Colonic mucosa (tissue), 4 donors: ENCODE measurements at regions of chr3 and their contacts with region 1.

Region 1: DNA sequence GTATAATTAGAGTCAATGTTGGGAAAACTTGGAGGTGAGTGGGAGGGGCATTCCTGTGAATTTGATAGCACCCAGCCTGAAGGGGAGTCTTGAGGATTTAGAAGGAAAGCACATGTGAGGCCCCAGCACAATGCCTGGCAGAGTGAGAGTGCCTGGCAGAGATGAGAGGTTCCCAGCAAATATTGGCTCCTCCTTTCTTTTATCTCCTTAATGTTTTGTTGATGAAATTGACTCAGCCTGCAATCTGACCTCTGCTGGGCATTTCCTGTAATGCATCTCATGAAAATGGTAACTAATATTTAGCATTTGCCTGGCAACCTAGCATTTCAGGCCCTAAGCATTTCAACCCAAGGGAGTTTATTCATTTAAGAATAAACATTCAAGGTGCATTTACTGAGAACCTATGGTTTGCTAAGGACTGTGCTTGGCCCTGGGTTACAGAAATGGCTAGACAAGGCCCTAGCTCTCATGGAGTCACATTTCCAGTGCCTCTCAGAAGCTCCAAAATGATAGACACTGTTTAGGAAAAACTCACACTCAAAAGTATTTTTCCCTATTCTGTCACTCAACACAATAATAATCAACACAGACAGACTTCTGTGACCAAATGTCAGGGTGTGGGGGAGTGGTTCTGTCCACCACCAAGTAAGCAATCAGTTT is 19.0 kb downstream of the PDHB start:
- DNase-seq: peak; percentile 66
- H3K4me3 ChIP-seq: no peak overlapping the region
- H3K27ac ChIP-seq: no peak overlapping the region
- H3K4me1 ChIP-seq: no peaks in the 10 kb centered on the region
- H3K27me3 ChIP-seq: no peaks in the 10 kb centered on the region
- CTCF ChIP-seq: peak; percentile 68

Region 2: GRCh38 chr3:58317811-58318210 is 96.9 kb before region 1 on chr3:
- intact Hi-C with region 1: loop called (anchors 2 kb)
- DNase-seq: no peak
- H3K4me3 ChIP-seq: no peak overlapping the region
- H3K27ac ChIP-seq: no peak overlapping the region
- H3K4me1 ChIP-seq: no peaks in the 10 kb centered on the region
- H3K27me3 ChIP-seq: no peaks in the 10 kb centered on the region
- CTCF ChIP-seq: no peak

Region 3: DNA sequence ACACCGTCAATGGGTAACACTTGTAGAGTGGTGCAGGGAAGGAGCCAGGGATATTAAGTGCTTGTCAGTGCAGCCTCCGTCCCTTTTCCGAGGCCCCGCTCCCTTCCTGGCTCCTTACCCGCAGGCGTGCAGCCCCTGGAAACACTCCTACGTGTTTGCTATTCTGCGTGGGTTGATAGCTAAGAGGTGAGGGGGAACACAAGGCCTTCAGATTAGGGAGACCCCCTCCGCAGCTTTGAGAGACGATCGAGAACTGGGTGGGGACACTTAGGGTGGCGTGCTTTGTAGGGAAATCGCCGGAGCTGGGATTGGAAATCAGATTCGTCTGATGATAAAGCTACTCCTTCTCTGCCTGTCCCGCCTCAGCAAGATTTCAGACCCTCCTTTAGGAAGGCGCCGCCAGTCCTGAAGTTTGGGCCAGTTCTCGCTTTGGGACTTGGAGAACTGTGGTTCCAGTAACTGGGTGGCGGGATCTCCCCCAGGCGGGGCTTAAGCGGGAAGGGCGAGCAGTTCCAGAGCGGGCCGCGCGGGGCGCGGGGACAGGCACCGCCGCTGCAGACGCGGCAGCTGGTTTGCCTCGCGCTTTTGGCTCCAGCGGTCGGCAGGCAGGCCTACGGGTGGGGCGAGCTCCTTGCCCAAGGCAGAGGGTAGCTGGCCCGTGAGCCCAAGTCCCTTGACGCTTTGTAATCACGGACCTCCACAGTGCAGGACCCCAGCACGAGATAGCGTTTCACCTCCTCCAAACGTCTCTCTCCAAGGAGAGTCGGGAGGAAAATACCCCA is 170.5 kb after region 1 on chr3:
- intact Hi-C with region 1: no loop called
- DNase-seq: peak; percentile 81
- H3K4me3 ChIP-seq: peak overlapping the region; percentile 46
- H3K27ac ChIP-seq: peak overlapping the region; percentile 54
- H3K4me1 ChIP-seq: no peaks in the 10 kb centered on the region
- H3K27me3 ChIP-seq: peaks cover 13% of the 10 kb centered on the region
- CTCF ChIP-seq: peak; percentile 85